Right ventricle myocardium inferior (tissue), 1 donor: ENCODE measurements at regions of chr6 and their contacts with region 1.

Region 1: DNA sequence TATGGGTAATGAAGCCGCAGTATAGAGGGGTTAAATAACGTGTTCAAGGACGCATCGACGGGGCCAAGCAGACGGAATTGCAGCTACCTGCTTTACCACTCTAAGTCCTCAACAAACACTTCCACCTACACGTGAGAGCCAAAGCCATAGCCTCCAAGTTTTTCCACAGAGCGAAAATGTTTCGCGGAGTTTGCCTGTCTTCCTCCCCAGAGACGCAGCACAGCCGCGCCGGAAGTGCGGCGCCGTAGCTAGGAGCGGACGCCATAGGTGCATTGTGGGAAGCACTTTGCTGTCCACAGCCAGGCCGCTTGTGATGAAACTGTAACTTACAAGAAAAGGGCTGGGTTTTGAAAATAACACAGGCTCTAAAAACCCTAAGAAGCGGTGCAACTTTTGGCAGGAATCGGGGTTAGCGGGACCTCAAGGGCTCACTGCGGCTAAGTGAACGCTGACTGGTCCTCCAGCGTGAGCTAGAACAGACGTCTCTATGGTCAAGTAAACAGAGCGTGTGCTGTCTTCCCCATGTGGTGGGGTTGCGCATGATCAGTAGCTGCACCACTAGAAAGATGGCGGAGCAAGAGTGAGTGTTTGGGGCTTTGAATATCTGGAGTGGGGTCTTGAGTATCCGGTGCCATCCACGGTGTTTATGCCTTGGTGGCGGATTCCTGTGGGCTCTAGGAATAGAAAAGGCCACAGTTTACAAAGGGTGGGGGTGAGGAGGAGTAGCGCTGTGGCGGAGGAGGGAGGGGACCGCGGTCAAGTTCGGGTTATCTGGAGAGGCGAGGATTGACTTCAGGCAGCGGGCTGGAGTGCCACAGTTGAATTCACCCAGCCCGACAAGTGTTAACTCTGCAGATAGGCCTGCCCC is at the start of gene RPL7L1:
- DNase-seq: peak; percentile 93
- ATAC-seq: peak; percentile 98
- total RNA-seq, gene RPL7L1: 44.5 TPM

Region 2: DNA sequence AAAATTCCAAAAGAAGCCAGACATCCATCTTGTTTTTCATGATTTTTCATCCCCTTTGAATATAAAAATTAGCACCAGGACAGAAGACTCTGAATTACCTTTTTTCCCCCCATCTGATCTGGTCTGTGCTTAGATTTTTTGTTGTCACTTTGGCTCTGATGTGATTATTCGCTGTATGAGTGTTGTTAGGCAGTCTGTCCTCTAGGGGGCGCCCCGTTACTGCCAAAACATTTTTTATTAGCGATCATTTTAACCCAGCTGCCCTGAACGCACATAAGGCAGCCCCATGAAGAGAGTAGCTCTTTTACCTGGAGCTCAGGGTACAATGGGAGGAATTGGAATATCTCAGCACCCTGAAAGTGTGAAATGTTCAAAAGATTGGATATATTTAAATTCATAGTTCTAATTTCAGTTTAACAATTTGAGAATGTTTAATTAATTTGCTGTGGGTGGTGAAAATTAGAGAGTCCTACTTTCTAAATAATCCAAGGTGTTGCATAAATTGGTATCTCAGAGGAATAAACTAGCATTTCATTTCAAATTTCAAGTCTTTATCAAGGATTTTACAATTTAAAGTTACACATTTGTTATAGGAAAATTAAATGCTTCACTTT is 218.0 kb before region 1 on chr6:
- intact Hi-C with region 1: loop called (anchors 1 kb)
- DNase-seq: peak; percentile 86
- ATAC-seq: peak; percentile 80

Region 3: GRCh38 chr6:42726485-42727086 is 153.0 kb before region 1 on chr6:
- intact Hi-C with region 1: loop called (anchors 5 kb)
- DNase-seq: peak; percentile 84
- ATAC-seq: peak; percentile 95

Region 4: GRCh38 chr6:42745707-42746462 is 133.7 kb before region 1 on chr6 and contains the start of gene TBCC:
- intact Hi-C with region 1: loop called (anchors 5 kb)
- DNase-seq: peak; percentile 96
- ATAC-seq: peak; percentile 95
- total RNA-seq, gene TBCC: 12.0 TPM

Region 5: DNA sequence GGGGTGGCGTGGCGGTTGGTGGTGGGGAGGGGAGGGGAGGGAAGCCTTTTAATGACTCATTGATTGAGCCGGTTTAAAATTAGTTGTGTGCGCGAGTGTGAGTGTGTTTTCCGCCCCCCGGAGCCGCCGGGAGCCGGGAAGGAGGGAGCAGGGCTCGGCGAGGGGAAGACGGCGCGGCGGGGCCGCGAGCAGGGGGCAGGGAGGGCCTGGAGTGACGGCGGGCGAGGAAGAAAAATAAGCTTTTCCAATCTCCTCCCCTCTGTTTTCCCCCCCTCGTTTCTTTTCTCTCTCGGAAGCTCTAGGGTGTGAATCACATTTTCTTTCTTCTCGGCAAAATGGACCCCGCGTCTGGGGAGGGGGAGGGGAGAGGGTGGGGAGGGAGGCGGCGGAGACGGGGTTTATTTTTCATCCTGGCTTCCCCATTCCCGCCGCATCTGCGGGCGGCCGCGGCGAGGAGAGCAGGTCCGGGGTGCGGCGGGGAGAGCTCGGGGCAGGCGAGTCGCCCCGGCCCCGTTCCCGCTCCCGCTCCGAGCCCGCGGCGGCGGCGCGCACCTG is 96.9 kb before region 1 on chr6:
- intact Hi-C with region 1: loop called (anchors 2 kb)
- DNase-seq: peak; percentile 88
- ATAC-seq: peak; percentile 83

Region 6: GRCh38 chr6:43328528-43328927 is 448.9 kb after region 1 on chr6:
- intact Hi-C with region 1: no loop called
- DNase-seq: no peak
- ATAC-seq: peak; percentile 92